Endothelial cell of umbilical vein (primary cell): ENCODE measurements at regions of chr6 and their contacts with region 1.

Region 1: GRCh38 chr6:151004415-151005024 is 139.0 kb downstream of the MTHFD1L start:
- DNase-seq: peak; percentile 100
- H3K4me3 ChIP-seq: no peak overlapping the region
- H3K27ac ChIP-seq: peak overlapping the region; percentile 94
- H3K4me1 ChIP-seq: peaks cover 41% of the 10 kb centered on the region
- H3K27me3 ChIP-seq: no peaks in the 10 kb centered on the region
- CTCF ChIP-seq: no peak
- POLR2A ChIP-seq: peak; percentile 71

Region 2: GRCh38 chr6:150800674-150801314 is 203.7 kb before region 1 on chr6:
- CTCF ChIA-PET with region 1: no interaction called
- POLR2A ChIA-PET with region 1: no interaction called
- dilution Hi-C with region 1: no loop called
- intact Hi-C with region 1: no loop called
- DNase-seq: no peak
- H3K4me3 ChIP-seq: no peak overlapping the region
- H3K27ac ChIP-seq: no peak overlapping the region
- H3K4me1 ChIP-seq: no peaks in the 10 kb centered on the region
- H3K27me3 ChIP-seq: no peaks in the 10 kb centered on the region
- CTCF ChIP-seq: no peak
- POLR2A ChIP-seq: no peak

Region 3: DNA sequence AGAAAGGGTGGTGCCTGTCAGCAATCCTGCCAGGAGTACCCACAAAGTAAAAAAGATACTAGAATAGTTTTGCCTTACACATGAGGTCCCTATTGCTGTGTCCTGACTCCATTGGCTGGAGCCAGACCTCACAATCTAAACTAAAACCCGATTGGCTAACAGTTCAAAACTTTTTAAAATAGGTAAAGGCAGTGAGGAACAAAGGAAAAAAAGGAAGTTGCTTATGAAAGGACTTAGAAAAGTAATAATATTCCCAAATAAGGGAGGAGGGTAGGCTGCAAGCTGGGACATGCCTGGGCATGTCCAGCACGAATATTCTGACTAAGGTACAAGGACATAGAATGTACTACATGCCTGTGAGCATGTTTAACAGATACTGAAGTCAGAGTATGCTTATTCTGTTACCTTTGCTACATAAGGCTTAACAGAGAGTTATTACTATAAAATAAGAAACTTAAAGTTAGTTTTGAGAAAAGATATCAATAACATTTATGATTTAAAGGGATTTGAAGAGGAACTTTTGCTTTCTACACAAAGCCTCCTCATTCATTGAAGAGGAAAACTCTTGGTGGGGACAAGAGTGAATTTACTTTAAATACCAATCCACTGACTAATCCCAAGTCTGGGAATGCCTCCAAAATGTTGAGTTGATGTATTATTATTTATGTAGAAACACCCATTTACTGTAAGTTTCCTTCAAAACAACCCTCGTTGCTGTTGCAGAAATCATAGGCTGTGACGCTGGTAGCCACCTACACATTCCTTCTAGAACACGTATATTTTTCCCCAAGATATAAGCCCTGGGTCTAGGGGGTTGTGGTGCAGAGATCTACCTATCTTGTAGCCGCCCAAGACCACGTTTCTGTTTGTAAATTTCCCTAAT is 147.2 kb before region 1 on chr6:
- CTCF ChIA-PET with region 1: no interaction called
- POLR2A ChIA-PET with region 1: no interaction called
- dilution Hi-C with region 1: no loop called
- intact Hi-C with region 1: loop called (anchors 1 kb)
- DNase-seq: peak; percentile 99
- H3K4me3 ChIP-seq: no peak overlapping the region
- H3K27ac ChIP-seq: peak overlapping the region; percentile 100
- H3K4me1 ChIP-seq: peaks cover 24% of the 10 kb centered on the region
- H3K27me3 ChIP-seq: no peaks in the 10 kb centered on the region
- CTCF ChIP-seq: no peak
- POLR2A ChIP-seq: peak; percentile 83

Region 4: DNA sequence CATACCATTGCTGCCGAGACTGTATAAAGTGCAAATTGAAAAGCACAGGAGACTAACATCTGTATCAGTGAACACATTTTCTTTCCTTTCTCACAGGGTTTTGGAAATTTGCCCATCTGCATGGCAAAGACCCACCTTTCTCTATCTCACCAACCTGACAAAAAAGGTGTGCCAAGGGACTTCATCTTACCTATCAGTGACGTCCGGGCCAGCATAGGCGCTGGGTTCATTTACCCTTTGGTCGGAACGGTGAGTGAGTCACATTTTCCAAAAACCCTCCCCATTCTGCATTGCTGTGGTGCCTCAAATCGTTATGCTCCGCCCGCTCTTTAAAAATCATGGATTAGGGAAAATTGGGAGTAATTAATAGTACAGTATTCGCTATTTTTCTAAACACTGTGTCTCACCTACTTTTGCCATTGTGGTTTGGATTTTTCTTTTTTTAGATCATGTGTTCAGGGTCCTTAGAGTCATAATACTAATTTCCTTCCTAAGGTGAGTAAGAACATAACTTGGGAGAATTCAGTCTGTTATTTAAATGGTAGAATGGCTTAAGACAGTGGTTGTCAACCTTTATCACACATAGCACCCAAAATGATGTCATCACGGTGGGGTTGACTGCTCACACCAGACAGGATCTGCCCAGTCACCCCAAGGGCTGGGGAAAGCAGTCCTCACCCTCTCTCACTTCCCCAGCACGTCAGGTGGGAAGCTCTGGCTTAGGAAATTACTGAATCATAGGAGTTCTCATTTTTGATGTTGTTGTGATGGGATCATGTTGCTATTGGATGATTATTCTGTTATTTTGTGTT is 32.6 kb after region 1 on chr6:
- CTCF ChIA-PET with region 1: interaction called, 4 read pairs
- POLR2A ChIA-PET with region 1: no interaction called
- dilution Hi-C with region 1: no loop called
- intact Hi-C with region 1: loop called (anchors 1 kb)
- DNase-seq: peak; percentile 82
- H3K4me3 ChIP-seq: no peak overlapping the region
- H3K27ac ChIP-seq: peak overlapping the region; percentile 100
- H3K4me1 ChIP-seq: peaks cover 52% of the 10 kb centered on the region
- H3K27me3 ChIP-seq: no peaks in the 10 kb centered on the region
- CTCF ChIP-seq: no peak
- POLR2A ChIP-seq: peak; percentile 44

Region 5: DNA sequence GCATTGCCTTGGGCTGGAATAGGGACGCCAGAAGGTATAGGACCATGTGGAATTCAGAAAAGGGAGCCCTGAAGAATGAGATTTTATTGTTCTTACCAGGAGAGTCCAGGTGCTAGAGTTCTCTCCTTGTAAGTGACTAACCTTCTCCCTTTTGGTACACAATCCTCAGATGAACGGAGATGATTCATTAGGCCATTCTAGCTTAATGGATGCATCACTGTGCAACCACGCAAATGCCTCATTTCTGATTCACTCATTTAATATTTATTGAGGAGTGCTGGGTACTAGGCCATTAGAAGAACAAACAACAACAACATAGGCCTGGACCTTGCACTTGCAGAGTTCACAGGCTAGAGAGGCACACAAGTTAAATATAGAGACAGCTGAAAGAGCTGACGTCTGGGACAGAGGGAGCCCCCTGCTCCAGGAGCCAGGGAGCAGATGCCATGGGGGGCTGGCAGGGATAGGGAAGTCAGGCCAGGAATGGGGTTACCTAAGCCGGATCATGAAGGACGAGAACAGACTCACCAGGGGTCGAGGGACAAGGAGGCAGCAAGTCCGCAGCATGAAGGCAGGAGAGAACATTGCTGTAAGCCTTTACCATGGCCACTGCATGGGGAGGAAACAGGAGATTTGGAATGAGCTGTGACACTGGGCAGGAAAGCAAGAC is 55.7 kb after region 1 on chr6:
- CTCF ChIA-PET with region 1: interaction called, 4 read pairs
- POLR2A ChIA-PET with region 1: no interaction called
- dilution Hi-C with region 1: no loop called
- intact Hi-C with region 1: loop called (anchors 1 kb)
- DNase-seq: peak; percentile 90
- H3K4me3 ChIP-seq: no peak overlapping the region
- H3K27ac ChIP-seq: peak overlapping the region; percentile 95
- H3K4me1 ChIP-seq: peaks cover 55% of the 10 kb centered on the region
- H3K27me3 ChIP-seq: no peaks in the 10 kb centered on the region
- CTCF ChIP-seq: no peak
- POLR2A ChIP-seq: no peak

Region 6: DNA sequence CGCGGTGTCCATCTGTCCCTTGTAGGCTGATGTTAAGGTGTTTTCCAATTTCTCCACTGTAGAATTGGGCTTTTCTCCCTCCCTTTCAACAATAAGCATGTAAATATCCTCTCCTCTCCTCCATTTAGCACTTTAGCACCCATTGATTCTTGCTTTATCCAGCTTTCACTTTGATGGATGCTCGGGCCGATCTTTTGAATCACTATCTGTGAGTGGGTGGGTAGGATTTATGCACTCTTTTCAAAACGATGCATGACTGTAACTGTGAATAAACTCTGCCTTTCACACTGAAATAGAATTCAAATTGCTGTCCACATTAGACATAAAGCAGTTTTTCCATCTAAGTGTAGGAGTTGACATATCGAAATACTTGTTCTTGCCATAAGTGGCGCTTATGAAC is 334.3 kb after region 1 on chr6:
- CTCF ChIA-PET with region 1: interaction called, 12 read pairs
- POLR2A ChIA-PET with region 1: no interaction called
- dilution Hi-C with region 1: no loop called
- intact Hi-C with region 1: no loop called
- DNase-seq: no peak
- H3K4me3 ChIP-seq: no peak overlapping the region
- H3K27ac ChIP-seq: no peak overlapping the region
- H3K4me1 ChIP-seq: no peaks in the 10 kb centered on the region
- H3K27me3 ChIP-seq: no peaks in the 10 kb centered on the region
- CTCF ChIP-seq: no peak
- POLR2A ChIP-seq: no peak